ENCODE measurements at regions of chr5 and their contacts with region 1.

Region 1: GRCh38 chr5:34915139-34915855 is at the starts of genes BRIX1 and RAD1:
- DNase-seq: peak; percentile 83 to 97 (median 93)
- ATAC-seq: peak; percentile 94
- H3K4me3 ChIP-seq: peak within 1 kb of the TSS; percentile 76 to 97
- H3K4me3 Mint-ChIP-seq: no peak within 1 kb of the TSS
- H3K27ac ChIP-seq: peak within 1 kb of the TSS; percentile 79 to 86
- H3K27ac Mint-ChIP-seq: no peak within 1 kb of the TSS
- H3K4me1 ChIP-seq: peaks cover 24% of the 10 kb centered on the region
- H3K4me1 Mint-ChIP-seq: peaks cover 37% of the 10 kb centered on the region
- H3K27me3 ChIP-seq: no peaks in the 10 kb centered on the region
- H3K27me3 Mint-ChIP-seq: no peaks in the 10 kb centered on the region
- CTCF ChIP-seq: no peak
- total RNA-seq, gene BRIX1: 34.9 to 40.9 TPM
- total RNA-seq, gene RAD1: 34.7 to 35.4 TPM

Region 2: DNA sequence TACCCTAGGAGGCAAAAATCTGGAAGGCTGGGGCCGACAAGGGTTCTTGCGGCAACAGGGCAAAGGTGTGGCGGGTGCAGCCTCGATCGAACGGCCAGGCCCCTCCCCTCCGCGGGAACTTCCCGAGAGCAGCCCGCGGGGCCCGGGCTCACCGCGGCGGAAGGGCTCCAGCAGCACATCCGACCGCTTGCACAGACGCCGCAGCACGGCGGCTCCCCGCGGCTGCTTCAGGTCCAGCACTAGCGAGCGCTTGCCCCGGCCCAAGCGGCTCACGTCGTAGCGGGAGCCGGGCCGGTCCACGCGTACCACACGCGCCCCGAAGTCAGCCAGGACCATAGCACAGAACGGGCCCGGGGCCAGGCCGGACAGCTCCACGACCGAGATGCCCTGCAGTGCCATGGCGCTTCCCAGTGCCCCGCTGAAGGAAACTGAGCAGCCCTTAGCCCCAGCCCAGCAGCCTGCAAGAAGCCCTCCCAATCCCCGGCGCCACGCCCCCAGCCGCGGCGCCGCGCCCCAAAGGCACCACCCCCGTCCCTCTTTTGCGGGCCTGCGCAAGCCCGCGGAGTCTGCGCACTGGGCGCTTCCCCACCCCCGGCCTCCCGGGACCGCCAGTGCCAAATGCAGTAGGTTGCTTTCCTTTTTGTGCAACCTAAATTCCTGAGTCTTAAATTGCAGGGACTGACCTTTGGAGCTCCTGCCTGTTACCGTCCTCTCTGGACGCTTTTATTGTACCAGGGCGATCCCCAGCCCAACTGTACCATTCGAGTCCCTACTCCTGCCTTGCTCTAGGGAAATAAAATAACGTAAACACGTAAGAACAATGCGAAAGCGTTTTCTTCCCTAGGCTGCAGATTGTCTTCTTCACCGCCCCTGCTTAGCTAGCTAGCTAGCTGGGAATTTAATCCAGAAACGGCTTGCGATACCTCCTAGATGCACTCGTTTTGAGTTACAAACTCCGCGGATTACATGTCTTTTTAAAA is 907.4 kb before region 1 on chr5 and contains the start of gene AMACR:
- CTCF ChIA-PET with region 1: no interaction called
- POLR2A ChIA-PET with region 1: no interaction called
- intact Hi-C with region 1: loop called in 1 of 2 experiments (anchors 10 kb)
- DNase-seq: peak; percentile 58 to 95 (median 89)
- ATAC-seq: peak; percentile 83
- H3K4me3 ChIP-seq: peak within 1 kb of the TSS; percentile 72 to 76
- H3K4me3 Mint-ChIP-seq: peak within 1 kb of the TSS; percentile 97
- H3K27ac ChIP-seq: peak within 1 kb of the TSS; percentile 67 to 78
- H3K27ac Mint-ChIP-seq: peak within 1 kb of the TSS; percentile 94
- H3K4me1 ChIP-seq: peaks cover 16% of the 10 kb centered on the region
- H3K4me1 Mint-ChIP-seq: peaks cover 21% of the 10 kb centered on the region
- H3K27me3 ChIP-seq: no peaks in the 10 kb centered on the region
- H3K27me3 Mint-ChIP-seq: no peaks in the 10 kb centered on the region
- CTCF ChIP-seq: no peak
- total RNA-seq, gene AMACR: 1.2 to 1.5 TPM

Region 3: GRCh38 chr5:34838785-34839714 is 76.2 kb before region 1 on chr5 and contains the start of gene TTC23L:
- CTCF ChIA-PET with region 1: interaction called, 3 read pairs
- POLR2A ChIA-PET with region 1: interaction called, 14 read pairs
- intact Hi-C with region 1: loop called (anchors 1 to 2 kb)
- DNase-seq: peak; percentile 77 to 97 (median 91)
- ATAC-seq: peak; percentile 90
- H3K4me3 ChIP-seq: peak within 1 kb of the TSS; percentile 73 to 74
- H3K4me3 Mint-ChIP-seq: peak within 1 kb of the TSS; percentile 95
- H3K27ac ChIP-seq: peak within 1 kb of the TSS; percentile 57 to 80
- H3K27ac Mint-ChIP-seq: peak within 1 kb of the TSS; percentile 96
- H3K4me1 ChIP-seq: peaks cover 3% of the 10 kb centered on the region
- H3K4me1 Mint-ChIP-seq: peaks cover 10% of the 10 kb centered on the region
- H3K27me3 ChIP-seq: peaks cover 0 to 3% of the 10 kb centered on the region in 2 experiments
- H3K27me3 Mint-ChIP-seq: no peaks in the 10 kb centered on the region
- CTCF ChIP-seq: no peak
- total RNA-seq, gene TTC23L: not detected

Region 4: DNA sequence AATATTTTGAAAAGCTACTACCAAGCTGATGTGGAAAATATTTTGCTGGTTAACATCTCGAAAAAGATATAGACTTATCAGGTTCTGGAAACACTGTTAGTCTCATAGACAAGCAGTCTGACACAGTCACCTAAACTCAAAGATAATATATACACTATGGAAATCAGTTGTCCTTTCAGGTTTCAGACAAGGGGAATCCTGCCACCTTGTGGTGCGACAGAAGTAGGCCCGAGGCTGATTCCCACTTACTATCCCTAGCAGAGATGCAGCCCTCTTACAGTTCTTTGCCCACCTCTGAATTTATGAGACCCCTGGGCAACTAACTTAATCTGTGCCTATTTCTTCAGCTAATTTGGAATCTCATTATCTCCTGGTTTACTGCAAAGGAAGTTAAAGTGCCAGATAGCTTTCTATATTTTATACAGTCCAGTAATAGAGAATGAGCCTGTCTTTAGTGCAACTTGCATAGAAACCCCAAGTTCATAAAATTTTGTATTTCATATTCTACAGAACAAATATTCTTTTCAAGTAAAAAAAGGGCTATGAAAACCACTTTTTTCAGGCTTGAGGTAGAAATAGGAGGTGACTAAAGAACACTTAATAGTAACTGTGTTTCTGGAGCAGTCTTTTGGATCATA is 16.9 kb before region 1 on chr5:
- CTCF ChIA-PET with region 1: interaction called, 12 read pairs
- POLR2A ChIA-PET with region 1: interaction called, 7 read pairs
- intact Hi-C with region 1: no loop called
- DNase-seq: peak; percentile 8 to 72 (median 60)
- ATAC-seq: peak; percentile 67
- H3K4me3 ChIP-seq: no peak overlapping the region
- H3K4me3 Mint-ChIP-seq: no peak overlapping the region
- H3K27ac ChIP-seq: no peak overlapping the region
- H3K27ac Mint-ChIP-seq: no peak overlapping the region
- H3K4me1 ChIP-seq: no peaks in the 10 kb centered on the region
- H3K4me1 Mint-ChIP-seq: no peaks in the 10 kb centered on the region
- H3K27me3 ChIP-seq: no peaks in the 10 kb centered on the region
- H3K27me3 Mint-ChIP-seq: no peaks in the 10 kb centered on the region
- CTCF ChIP-seq: peak; percentile 83

Region 5: GRCh38 chr5:35136386-35136785 is 221.1 kb after region 1 on chr5:
- CTCF ChIA-PET with region 1: no interaction called
- POLR2A ChIA-PET with region 1: no interaction called
- intact Hi-C with region 1: no loop called
- DNase-seq: peak in 2 of 9 experiments; percentile 2 to 19
- ATAC-seq: no peak
- H3K4me3 ChIP-seq: no peak overlapping the region
- H3K4me3 Mint-ChIP-seq: no peak overlapping the region
- H3K27ac ChIP-seq: no peak overlapping the region
- H3K27ac Mint-ChIP-seq: no peak overlapping the region
- H3K4me1 ChIP-seq: no peaks in the 10 kb centered on the region
- H3K4me1 Mint-ChIP-seq: peaks cover 6% of the 10 kb centered on the region
- H3K27me3 ChIP-seq: no peaks in the 10 kb centered on the region
- H3K27me3 Mint-ChIP-seq: peaks cover 25% of the 10 kb centered on the region
- CTCF ChIP-seq: no peak

Region 6: DNA sequence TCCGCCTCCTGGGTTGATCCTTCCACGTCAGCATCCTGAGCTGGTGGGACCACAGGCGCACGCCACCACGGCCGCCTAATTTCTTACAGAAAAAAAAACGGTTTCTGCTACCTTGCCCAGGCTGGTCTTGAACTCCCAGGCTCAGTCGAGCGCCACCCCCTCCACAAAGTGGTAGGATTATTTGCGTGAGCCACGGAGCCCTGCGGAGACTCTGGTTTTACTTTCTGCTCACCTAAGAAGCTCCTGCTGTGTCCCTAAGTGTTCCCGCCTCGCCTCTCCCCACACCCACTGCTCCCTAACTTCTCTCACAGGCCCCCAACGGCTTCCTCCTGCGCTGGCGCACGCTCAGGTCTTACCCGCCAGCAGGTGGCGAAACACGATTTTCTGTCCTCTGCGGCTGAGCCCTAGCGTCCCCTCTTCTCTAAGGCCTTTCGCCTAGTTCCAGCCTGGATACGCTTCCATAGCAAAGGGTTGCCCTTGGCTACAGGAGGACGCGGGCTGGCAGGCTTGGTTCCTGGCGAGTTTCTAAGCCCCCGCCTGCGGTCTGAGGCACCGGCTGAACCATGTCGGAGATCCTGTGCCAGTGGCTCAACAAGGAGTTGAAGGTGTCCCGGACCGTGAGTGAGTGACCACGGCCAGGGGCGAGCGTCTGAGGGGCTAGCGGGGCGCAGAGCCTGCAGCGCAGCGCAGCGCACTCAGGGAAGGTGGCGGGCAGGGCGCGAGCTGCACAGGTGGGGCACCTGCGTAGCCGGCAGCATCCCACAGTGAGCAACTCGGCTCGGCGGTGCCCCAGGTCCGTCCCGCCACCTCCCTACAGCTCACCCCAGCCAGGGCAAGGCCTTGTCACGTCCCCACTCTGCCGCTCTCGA is 702.4 kb after region 1 on chr5 and contains the start of gene SPEF2:
- CTCF ChIA-PET with region 1: no interaction called
- POLR2A ChIA-PET with region 1: no interaction called
- intact Hi-C with region 1: loop called (anchors 5 to 10 kb)
- DNase-seq: peak; percentile 54 to 90 (median 80)
- ATAC-seq: peak; percentile 84
- H3K4me3 ChIP-seq: peak within 1 kb of the TSS; percentile 84 to 88
- H3K4me3 Mint-ChIP-seq: peak within 1 kb of the TSS; percentile 91
- H3K27ac ChIP-seq: peak within 1 kb of the TSS; percentile 60 to 63
- H3K27ac Mint-ChIP-seq: peak within 1 kb of the TSS; percentile 95
- H3K4me1 ChIP-seq: peaks cover 16% of the 10 kb centered on the region
- H3K4me1 Mint-ChIP-seq: peaks cover 31% of the 10 kb centered on the region
- H3K27me3 ChIP-seq: no peaks in the 10 kb centered on the region
- H3K27me3 Mint-ChIP-seq: no peaks in the 10 kb centered on the region
- CTCF ChIP-seq: peak; percentile 78
- total RNA-seq, gene SPEF2: 3.5 to 4.7 TPM

Measured in CD8-positive, alpha-beta T cell (primary cell).